Left ventricle myocardium inferior (tissue), 1 donor: ENCODE measurements at regions of chr12 and their contacts with region 1.

Region 1: GRCh38 chr12:57832966-57833365 is 13.6 kb downstream of the CTDSP2 start:
- DNase-seq: no peak
- H3K4me3 ChIP-seq: peak overlapping the region; percentile 41
- H3K27ac ChIP-seq: peak overlapping the region; percentile 100
- H3K4me1 ChIP-seq: peaks cover 96% of the 10 kb centered on the region
- H3K27me3 ChIP-seq: no peaks in the 10 kb centered on the region
- CTCF ChIP-seq: no peak

Region 2: DNA sequence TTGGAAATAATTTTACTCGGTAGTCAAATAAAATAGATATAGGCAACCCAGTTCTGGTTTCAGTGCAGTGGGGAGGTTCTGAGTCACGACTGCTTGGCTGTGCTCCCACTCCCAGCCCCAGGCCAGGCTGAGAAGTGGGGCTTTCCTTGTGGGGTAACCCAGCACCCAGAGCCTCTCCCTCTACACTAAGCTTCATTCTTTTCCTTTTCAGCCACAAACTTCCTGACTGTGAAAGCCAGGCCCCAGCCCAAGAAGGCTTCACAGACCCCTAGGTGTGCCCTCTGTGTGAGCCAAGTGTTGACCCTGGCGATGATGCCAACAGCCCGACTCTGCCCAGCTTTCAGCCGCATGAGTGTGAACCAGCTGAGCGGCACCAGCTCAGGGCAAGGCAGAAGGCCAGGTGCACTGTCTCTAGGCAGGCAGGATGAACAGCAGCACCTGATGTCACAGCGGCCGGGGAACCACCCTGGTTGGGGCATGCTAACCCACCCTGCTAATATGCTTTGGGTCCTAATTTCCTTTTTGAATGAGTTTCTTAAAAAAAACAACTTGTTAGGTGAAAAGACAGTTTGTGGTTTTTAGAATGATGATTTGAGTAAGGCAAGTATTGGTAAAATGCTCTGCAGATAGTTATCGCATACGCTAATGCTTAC is 66.2 kb after region 1 on chr12:
- intact Hi-C with region 1: loop called (anchors 5 kb)
- DNase-seq: peak; percentile 31
- H3K4me3 ChIP-seq: no peak overlapping the region
- H3K27ac ChIP-seq: peak overlapping the region; percentile 98
- H3K4me1 ChIP-seq: peaks cover 51% of the 10 kb centered on the region
- H3K27me3 ChIP-seq: no peaks in the 10 kb centered on the region
- CTCF ChIP-seq: no peak

Region 3: GRCh38 chr12:58288190-58288589 is 455.2 kb after region 1 on chr12:
- intact Hi-C with region 1: no loop called
- DNase-seq: no peak
- H3K4me3 ChIP-seq: no peak overlapping the region
- H3K27ac ChIP-seq: no peak overlapping the region
- H3K4me1 ChIP-seq: peaks cover 8% of the 10 kb centered on the region
- H3K27me3 ChIP-seq: no peaks in the 10 kb centered on the region
- CTCF ChIP-seq: no peak